Left ventricle myocardium inferior (tissue), 1 donor: ENCODE measurements at regions of chr20 and their contacts with region 1.

Region 1: DNA sequence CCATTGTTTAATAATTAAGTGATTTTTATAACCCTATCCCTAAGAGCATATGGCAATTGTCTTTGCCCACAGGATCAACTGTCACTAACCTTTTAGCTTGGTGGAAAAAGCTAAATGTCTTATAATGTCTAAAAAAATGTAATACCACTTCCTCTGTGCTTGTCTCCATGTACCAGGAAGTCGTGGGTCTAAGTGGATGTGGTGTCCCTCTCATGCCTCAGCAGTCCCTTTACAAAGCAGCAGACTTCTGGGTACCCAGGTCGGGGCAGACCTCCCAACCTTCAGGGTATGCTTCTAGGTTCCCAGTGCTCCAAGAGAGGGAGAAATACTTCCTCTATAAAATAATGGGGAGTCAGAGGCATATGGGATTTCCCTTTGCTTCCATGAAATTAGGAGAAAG is 74.7 kb downstream of the ZHX3 start:
- DNase-seq: no peak
- H3K4me3 ChIP-seq: no peak overlapping the region
- H3K27ac ChIP-seq: no peak overlapping the region
- H3K4me1 ChIP-seq: peaks cover 56% of the 10 kb centered on the region
- H3K27me3 ChIP-seq: no peaks in the 10 kb centered on the region
- CTCF ChIP-seq: no peak

Region 2: DNA sequence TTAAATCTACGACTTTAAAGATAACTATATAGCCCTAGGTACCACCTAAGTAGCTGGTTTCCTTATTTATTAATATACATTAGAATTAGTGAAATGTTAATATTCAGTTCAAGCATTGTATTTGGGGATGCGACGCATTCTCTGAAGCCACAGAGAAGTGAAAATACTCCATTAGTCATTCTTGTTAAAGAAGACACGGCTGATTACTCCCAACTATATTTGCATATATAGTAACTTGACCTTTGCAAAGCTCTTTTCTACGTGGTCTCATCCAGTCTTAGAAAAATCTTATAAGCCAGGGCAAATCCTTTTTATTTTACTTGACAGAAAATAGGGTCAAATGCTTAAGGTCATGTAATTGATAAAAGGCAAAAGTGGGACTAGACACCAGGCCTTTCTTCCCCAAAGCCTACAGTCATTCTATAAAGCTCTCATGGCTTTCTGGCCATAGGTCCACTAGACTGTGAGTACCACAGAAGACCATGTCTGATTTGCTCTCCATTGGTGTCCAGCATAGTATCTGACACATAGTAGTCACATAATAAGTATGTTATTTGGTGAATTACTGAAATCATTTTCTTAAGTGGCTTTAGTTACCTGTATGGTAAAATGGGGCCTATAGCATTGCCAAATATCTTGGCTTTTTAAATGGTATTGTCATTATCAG is 63.4 kb after region 1 on chr20:
- intact Hi-C with region 1: no loop called
- DNase-seq: no peak
- H3K4me3 ChIP-seq: no peak overlapping the region
- H3K27ac ChIP-seq: no peak overlapping the region
- H3K4me1 ChIP-seq: peaks cover 54% of the 10 kb centered on the region
- H3K27me3 ChIP-seq: no peaks in the 10 kb centered on the region
- CTCF ChIP-seq: no peak

Region 3: DNA sequence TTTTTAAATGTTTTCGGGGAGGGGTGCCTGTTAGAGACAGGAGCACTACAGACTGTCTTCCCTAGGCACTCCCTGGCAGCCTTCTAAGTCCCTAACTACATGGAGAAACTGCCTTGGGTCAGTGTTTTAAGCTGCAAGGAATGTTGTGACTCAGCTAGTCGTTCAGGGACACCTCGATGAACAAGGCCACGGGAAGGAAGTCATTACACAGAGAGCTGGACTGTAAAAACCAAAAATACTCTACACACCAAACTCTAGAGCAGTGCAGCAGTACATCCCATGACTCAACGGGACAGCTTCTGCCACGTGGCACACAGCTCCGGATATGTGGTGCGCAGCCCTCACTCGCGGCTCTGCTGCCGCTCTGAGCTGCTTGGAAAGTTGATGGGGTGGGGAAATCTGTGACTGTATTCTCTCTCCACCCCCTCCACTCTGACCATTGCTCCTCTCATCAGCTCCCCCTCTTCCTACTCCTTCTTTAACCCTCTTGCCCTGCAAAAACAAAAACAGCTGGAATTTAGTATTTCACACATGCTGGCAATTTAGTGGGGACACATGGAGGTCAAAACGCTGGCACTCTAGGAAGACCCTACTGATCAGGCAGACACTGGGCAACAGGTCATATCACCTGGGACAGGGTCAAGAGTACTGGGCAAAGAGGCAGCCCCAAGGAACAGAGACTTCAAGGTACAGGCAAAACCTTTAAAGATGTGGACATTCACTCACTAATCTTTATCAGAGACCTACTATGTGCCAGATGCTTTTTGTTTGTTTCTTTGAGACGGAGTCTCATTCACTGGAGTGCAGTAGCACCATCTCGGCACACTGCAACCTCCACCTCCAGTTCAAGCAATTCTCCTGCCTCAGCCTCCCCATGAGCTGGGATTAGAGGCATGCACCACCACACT is 86.9 kb after region 1 on chr20:
- intact Hi-C with region 1: loop called (anchors 5 kb)
- DNase-seq: peak; percentile 77
- H3K4me3 ChIP-seq: peak overlapping the region; percentile 10
- H3K27ac ChIP-seq: peak overlapping the region; percentile 87
- H3K4me1 ChIP-seq: peaks cover 27% of the 10 kb centered on the region
- H3K27me3 ChIP-seq: no peaks in the 10 kb centered on the region
- CTCF ChIP-seq: no peak